ENCODE measurements at regions of chr1 and their contacts with region 1.

Region 1: DNA sequence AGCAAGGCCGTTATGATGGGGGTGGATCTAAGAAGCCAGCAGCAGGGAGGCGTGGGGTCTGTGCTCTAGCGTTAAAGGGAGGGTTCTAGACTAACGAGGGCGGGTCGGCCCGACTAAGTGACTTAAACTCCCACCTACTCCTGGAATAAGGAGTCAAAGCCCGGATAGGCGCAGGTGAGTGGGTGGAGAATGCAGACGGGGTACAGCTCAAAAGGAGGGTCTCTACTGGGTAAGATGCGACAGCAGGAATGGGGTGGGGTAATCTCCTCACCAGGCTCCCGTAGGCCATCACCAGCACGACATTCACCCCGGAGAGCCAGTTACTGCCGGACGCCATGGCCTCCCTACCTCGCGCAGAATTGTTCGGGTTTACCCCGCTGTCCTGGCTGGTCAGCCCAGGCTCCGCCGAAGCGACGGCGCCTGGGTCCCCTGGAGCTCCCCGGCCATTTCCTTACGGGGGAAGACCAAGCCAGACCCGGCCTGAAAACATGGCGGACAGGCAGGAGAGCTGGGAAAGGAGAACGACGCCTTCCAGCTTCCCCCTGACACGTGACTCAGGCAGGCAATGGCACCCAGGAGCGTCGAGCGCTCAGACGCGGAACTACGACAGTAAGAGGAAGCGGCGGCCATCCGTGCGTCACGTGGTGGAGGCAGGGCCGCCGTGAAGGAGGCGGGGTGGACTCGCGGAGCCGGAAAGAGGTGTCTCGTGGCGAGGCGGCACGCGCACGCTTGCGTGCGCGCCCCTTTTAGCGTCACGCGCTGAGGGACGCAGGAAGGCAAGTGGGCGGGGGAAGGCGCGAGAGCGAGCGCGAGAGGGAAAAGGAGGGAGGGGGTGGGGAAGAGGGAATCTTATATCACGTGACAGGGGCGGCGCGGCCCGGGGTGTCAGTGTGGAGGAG is at the start of gene UBAP2L:
- DNase-seq: peak; percentile 97 to 100 (median 99)
- ATAC-seq: peak; percentile 82
- H3K4me3 ChIP-seq: peak within 1 kb of the TSS; percentile 68 to 93
- H3K4me3 Mint-ChIP-seq: peak within 1 kb of the TSS; percentile 95
- H3K27ac ChIP-seq: peak within 1 kb of the TSS; percentile 93 to 99
- H3K27ac Mint-ChIP-seq: peak within 1 kb of the TSS; percentile 99
- H3K4me1 ChIP-seq: peaks cover 54% of the 10 kb centered on the region
- H3K4me1 Mint-ChIP-seq: peaks cover 71% of the 10 kb centered on the region
- H3K27me3 ChIP-seq: no peaks in the 10 kb centered on the region
- H3K27me3 Mint-ChIP-seq: no peaks in the 10 kb centered on the region
- CTCF ChIP-seq: no peak
- total RNA-seq, gene UBAP2L: 212 to 226 TPM

Region 2: GRCh38 chr1:153783233-153784190 is 436.8 kb before region 1 on chr1:
- CTCF ChIA-PET with region 1: no interaction called
- POLR2A ChIA-PET with region 1: no interaction called
- intact Hi-C with region 1: loop called in 1 of 2 experiments (anchors 1 kb)
- DNase-seq: peak; percentile 84 to 96 (median 91)
- ATAC-seq: peak; percentile 98
- H3K4me3 ChIP-seq: peak overlapping the region; percentile 91 to 93
- H3K4me3 Mint-ChIP-seq: peak overlapping the region; percentile 88
- H3K27ac ChIP-seq: peak overlapping the region; percentile 92 to 99
- H3K27ac Mint-ChIP-seq: peak overlapping the region; percentile 95
- H3K4me1 ChIP-seq: peaks cover 12% of the 10 kb centered on the region
- H3K4me1 Mint-ChIP-seq: peaks cover 10% of the 10 kb centered on the region
- H3K27me3 ChIP-seq: no peaks in the 10 kb centered on the region
- H3K27me3 Mint-ChIP-seq: no peaks in the 10 kb centered on the region
- CTCF ChIP-seq: no peak

Region 3: DNA sequence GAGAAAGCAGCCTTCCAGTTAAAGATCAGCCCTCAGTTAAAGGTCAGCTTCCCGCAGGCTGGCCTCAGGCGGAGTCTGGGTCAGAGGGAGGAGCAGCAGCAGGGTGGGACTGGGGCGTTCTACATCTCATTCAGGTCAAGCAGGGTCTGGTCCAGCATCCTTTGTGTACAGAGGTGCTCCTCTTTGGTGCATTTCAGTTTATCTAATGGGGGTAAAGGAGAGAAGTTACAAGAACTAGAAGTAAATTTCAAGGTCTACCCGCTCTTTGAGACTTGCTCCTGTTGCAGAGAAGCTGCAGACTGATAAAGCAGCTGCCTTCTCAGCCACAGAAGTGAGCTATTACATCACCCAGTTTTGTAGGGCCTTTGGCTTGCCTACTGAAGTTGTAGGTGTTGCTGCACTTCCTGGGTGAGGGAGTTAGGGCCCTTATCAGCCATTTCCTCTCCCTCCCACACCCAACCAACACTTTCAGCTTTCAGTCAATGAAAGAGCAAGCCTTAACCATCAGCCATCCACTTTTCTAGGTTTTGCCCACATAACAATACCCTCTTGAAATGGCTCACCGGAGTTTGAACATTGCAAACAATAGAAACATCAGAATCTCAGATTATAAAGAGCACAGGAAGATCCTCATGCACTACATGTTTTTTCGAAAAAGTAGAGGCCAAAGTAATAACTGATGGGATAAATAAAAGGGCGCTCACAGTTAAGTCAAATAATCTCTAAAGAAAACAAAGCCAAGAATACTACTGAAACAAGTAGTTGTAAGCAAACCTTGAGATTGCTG is 62.6 kb before region 1 on chr1:
- CTCF ChIA-PET with region 1: no interaction called
- POLR2A ChIA-PET with region 1: interaction called, 3 read pairs
- intact Hi-C with region 1: loop called in 1 of 2 experiments (anchors 2 kb)
- DNase-seq: peak; percentile 41 to 93 (median 71)
- ATAC-seq: peak; percentile 98
- H3K4me3 ChIP-seq: peak overlapping the region in 1 of 2 experiments; percentile 16
- H3K4me3 Mint-ChIP-seq: peak overlapping the region; percentile 61
- H3K27ac ChIP-seq: peak overlapping the region; percentile 51 to 61
- H3K27ac Mint-ChIP-seq: peak overlapping the region; percentile 95
- H3K4me1 ChIP-seq: peaks cover 72% of the 10 kb centered on the region
- H3K4me1 Mint-ChIP-seq: peaks cover 78% of the 10 kb centered on the region
- H3K27me3 ChIP-seq: no peaks in the 10 kb centered on the region
- H3K27me3 Mint-ChIP-seq: no peaks in the 10 kb centered on the region
- CTCF ChIP-seq: no peak

Region 4: GRCh38 chr1:154198756-154199562 is 21.4 kb before region 1 on chr1:
- CTCF ChIA-PET with region 1: interaction called, 18 read pairs
- POLR2A ChIA-PET with region 1: interaction called, 6 read pairs
- intact Hi-C with region 1: loop called in 1 of 2 experiments (anchors 1 kb)
- DNase-seq: peak in 6 of 9 experiments; percentile 41 to 81 (median 52)
- ATAC-seq: peak; percentile 97
- H3K4me3 ChIP-seq: no peak overlapping the region
- H3K4me3 Mint-ChIP-seq: no peak overlapping the region
- H3K27ac ChIP-seq: no peak overlapping the region
- H3K27ac Mint-ChIP-seq: no peak overlapping the region
- H3K4me1 ChIP-seq: peaks cover 9% of the 10 kb centered on the region
- H3K4me1 Mint-ChIP-seq: no peaks in the 10 kb centered on the region
- H3K27me3 ChIP-seq: no peaks in the 10 kb centered on the region
- H3K27me3 Mint-ChIP-seq: peaks cover 3% of the 10 kb centered on the region
- CTCF ChIP-seq: peak; percentile 63